Esophagus squamous epithelium (tissue), 5 donors: ENCODE measurements at regions of chr2 and their contacts with region 1.

Region 1: DNA sequence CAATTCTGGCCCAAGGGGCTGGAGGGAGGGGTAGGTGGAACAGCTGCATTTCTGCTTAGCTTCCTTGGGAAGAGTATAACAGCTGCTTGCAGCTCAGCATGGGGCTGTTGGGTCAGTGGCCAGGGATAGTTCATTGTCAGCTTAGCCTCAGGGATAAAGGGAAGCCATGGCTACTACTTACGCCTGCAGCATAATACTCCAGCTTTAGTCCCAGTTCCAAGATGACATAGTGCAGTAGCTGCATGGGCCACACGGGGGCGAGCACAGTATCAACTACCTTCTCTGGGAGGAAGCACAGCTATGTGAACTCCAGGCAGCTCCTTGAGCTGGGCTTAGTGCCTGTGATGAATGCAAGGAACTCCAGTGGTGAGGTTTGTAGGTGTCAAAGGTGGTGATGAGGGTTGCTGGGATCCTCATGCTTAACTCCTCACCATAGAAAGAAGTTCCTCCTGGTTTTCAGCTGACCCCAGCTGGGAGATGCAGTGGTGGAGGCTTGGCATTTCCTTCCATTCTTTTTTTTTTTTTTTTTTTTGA is 35.4 kb upstream of the RHOB start:
- DNase-seq: no peak
- H3K4me3 ChIP-seq: no peak overlapping the region
- H3K27ac ChIP-seq: no peak overlapping the region
- H3K4me1 ChIP-seq: peaks cover 0 to 12% (median 0%) of the 10 kb centered on the region in 3 donors
- H3K27me3 ChIP-seq: no peaks in the 10 kb centered on the region
- CTCF ChIP-seq: peak; percentile 61 to 89 (median 82)
- POLR2A ChIP-seq: no peak

Region 2: GRCh38 chr2:20326163-20326780 is 85.2 kb before region 1 on chr2:
- intact Hi-C with region 1: no loop called
- DNase-seq: no peak
- H3K4me3 ChIP-seq: no peak overlapping the region
- H3K27ac ChIP-seq: peak overlapping the region in 2 of 4 donors; percentile 60 to 71
- H3K4me1 ChIP-seq: peaks cover 0 to 33% (median 16%) of the 10 kb centered on the region in 3 donors
- H3K27me3 ChIP-seq: no peaks in the 10 kb centered on the region
- CTCF ChIP-seq: peak; percentile 37 to 71 (median 60)
- POLR2A ChIP-seq: no peak

Region 3: GRCh38 chr2:20642055-20642971 is 230.9 kb after region 1 on chr2:
- intact Hi-C with region 1: loop called (anchors 10 kb)
- DNase-seq: no peak
- H3K4me3 ChIP-seq: no peak overlapping the region
- H3K27ac ChIP-seq: peak overlapping the region; percentile 41 to 86 (median 82)
- H3K4me1 ChIP-seq: peaks cover 0 to 25% (median 12%) of the 10 kb centered on the region in 3 donors
- H3K27me3 ChIP-seq: no peaks in the 10 kb centered on the region
- CTCF ChIP-seq: peak; percentile 87 to 95 (median 94)
- POLR2A ChIP-seq: no peak